Activated CD8-positive, alpha-beta T cell treated with anti-CD3 and anti-CD28 coated beads for 36 hours (primary cell): ENCODE measurements at regions of chr3 and their contacts with region 1.

Region 1: DNA sequence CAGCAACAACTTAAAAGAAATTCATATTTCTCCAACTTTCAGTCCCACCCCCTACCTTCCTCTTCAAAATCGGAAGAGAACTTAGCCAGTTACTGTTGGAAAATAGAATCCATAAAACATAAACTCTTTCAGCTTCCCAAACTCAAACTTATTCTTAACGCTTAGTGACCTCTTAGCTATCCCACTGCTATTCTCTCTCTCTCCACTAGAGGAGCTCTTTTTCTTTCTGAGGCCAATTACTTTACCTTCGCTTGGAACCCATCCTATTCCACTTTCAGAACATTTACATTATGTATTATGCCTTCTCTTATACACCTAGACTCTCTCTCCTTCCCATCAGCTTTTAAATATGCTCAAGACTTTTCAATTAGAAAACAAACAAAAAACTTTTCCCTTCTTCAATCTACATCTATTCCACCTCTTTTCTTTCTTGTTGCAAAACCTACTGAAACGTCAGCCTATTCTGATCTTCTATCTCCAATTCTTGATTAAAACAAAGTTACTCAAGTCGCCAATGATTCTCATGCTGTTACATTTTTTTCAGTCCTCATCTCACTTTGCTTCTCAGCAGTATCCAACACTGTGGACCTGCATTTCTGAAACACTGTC is 13.4 kb upstream of the GHSR start:
- DNase-seq: no peak
- ATAC-seq: peak; percentile 88
- H3K4me3 Mint-ChIP-seq: no peak overlapping the region
- H3K27ac Mint-ChIP-seq: no peak overlapping the region
- H3K4me1 Mint-ChIP-seq: no peaks in the 10 kb centered on the region
- H3K27me3 Mint-ChIP-seq: peaks cover 1% of the 10 kb centered on the region
- CTCF ChIP-seq: peak; percentile 98

Region 2: GRCh38 chr3:172449466-172450149 is 12.0 kb before region 1 on chr3:
- CTCF ChIA-PET with region 1: interaction called, 14 read pairs
- POLR2A ChIA-PET with region 1: no interaction called
- intact Hi-C with region 1: no loop called
- DNase-seq: peak; percentile 25
- ATAC-seq: no peak
- H3K4me3 Mint-ChIP-seq: no peak overlapping the region
- H3K27ac Mint-ChIP-seq: no peak overlapping the region
- H3K4me1 Mint-ChIP-seq: peaks cover 25% of the 10 kb centered on the region
- H3K27me3 Mint-ChIP-seq: peaks cover 71% of the 10 kb centered on the region
- CTCF ChIP-seq: no peak

Region 3: DNA sequence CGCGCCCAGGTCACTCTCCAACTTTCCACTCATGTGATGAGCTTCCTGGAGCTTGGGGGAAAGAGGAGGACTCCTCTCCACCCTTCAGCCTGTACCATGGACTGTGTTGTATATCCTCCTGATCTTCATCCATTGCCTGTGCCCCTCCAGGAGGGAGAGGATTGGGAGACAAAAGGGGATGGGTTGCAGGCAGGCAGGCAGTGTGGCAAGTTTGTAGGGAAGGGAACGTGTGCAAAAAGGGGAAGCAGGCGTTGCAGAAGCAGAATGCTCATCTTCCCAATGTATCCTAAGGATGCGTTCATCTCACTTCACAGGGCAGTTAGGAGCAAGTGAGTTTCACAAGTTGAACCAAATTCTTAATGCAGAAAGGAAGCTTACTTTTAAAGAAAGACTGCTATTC is 14.7 kb after region 1 on chr3:
- CTCF ChIA-PET with region 1: interaction called, 34 read pairs
- POLR2A ChIA-PET with region 1: interaction called, 3 read pairs
- intact Hi-C with region 1: no loop called
- DNase-seq: no peak
- ATAC-seq: no peak
- H3K4me3 Mint-ChIP-seq: peak overlapping the region; percentile 77
- H3K27ac Mint-ChIP-seq: no peak overlapping the region
- H3K4me1 Mint-ChIP-seq: peaks cover 9% of the 10 kb centered on the region
- H3K27me3 Mint-ChIP-seq: peaks cover 3% of the 10 kb centered on the region
- CTCF ChIP-seq: no peak

Region 4: GRCh38 chr3:172501560-172501959 is 39.9 kb after region 1 on chr3:
- CTCF ChIA-PET with region 1: interaction called, 10 read pairs
- POLR2A ChIA-PET with region 1: no interaction called
- intact Hi-C with region 1: no loop called
- DNase-seq: no peak
- ATAC-seq: no peak
- H3K4me3 Mint-ChIP-seq: no peak overlapping the region
- H3K27ac Mint-ChIP-seq: no peak overlapping the region
- H3K4me1 Mint-ChIP-seq: peaks cover 8% of the 10 kb centered on the region
- H3K27me3 Mint-ChIP-seq: no peaks in the 10 kb centered on the region
- CTCF ChIP-seq: no peak

Region 5: DNA sequence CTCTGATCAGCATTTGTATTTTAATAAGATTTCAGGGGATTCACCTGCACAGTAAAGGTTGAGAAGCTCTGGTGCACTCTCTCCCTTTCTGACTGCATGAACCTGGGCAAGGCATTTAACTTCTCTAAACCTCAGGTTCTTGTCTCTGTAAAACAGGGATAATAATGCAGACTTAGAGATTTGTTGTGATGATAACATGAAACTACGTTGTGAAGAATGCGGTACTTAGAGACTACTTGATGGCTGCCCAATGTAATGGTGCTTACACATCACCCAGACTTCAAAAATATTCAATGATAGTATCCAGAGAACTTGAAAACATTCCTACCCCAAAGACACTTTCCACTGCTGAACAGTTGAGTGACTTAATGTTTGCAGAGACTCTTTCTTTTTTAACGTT is 81.4 kb after region 1 on chr3:
- CTCF ChIA-PET with region 1: no interaction called
- POLR2A ChIA-PET with region 1: no interaction called
- intact Hi-C with region 1: no loop called
- DNase-seq: no peak
- ATAC-seq: no peak
- H3K4me3 Mint-ChIP-seq: no peak overlapping the region
- H3K27ac Mint-ChIP-seq: no peak overlapping the region
- H3K4me1 Mint-ChIP-seq: peaks cover 20% of the 10 kb centered on the region
- H3K27me3 Mint-ChIP-seq: no peaks in the 10 kb centered on the region
- CTCF ChIP-seq: no peak

Region 6: GRCh38 chr3:172561897-172562640 is 100.4 kb after region 1 on chr3:
- CTCF ChIA-PET with region 1: no interaction called
- POLR2A ChIA-PET with region 1: no interaction called
- intact Hi-C with region 1: no loop called
- DNase-seq: peak; percentile 35
- ATAC-seq: peak; percentile 65
- H3K4me3 Mint-ChIP-seq: peak overlapping the region; percentile 44
- H3K27ac Mint-ChIP-seq: peak overlapping the region; percentile 91
- H3K4me1 Mint-ChIP-seq: peaks cover 41% of the 10 kb centered on the region
- H3K27me3 Mint-ChIP-seq: no peaks in the 10 kb centered on the region
- CTCF ChIP-seq: no peak

Region 7: GRCh38 chr3:172607305-172608121 is 145.9 kb after region 1 on chr3:
- CTCF ChIA-PET with region 1: interaction called, 15 read pairs
- POLR2A ChIA-PET with region 1: no interaction called
- intact Hi-C with region 1: no loop called
- DNase-seq: no peak
- ATAC-seq: peak; percentile 27
- H3K4me3 Mint-ChIP-seq: no peak overlapping the region
- H3K27ac Mint-ChIP-seq: no peak overlapping the region
- H3K4me1 Mint-ChIP-seq: peaks cover 7% of the 10 kb centered on the region
- H3K27me3 Mint-ChIP-seq: peaks cover 4% of the 10 kb centered on the region
- CTCF ChIP-seq: no peak

Region 8: DNA sequence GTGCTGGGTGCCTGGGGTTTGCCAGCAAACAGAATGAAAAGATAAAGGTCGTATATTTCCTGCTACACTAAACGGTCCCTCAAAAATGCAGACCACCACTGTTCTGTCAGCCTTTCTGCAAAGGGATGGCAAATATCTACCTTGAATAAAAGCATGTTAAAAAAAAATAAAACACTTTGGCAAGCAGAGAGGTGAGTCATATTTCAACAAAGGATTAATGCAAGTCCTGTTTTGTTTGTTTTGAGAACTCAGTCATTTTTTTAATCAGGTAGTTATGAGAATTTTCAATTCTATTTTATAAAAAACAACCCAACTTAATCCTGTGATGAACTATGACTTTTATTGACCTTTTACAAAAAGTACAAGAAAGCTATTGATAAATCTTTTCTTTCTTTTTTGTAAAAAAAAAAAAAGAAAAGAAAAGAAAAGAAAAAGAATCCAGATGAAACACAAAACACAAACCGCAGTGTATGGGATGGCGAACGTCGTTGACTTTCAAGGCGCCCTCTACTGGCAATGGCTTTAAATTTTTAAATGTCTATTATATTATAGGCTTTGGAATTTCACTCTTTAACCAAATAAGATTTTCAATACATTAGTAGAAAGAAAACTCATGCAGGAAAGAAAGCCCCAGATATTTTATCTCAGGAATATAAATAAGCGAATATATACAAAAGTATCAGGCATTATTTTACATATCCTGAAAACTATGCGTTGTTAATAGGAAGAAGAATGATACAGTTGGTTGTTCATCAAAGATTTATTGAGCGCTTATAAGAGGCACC is 161.5 kb after region 1 on chr3:
- CTCF ChIA-PET with region 1: interaction called, 27 read pairs
- POLR2A ChIA-PET with region 1: no interaction called
- intact Hi-C with region 1: no loop called
- DNase-seq: peak; percentile 51
- ATAC-seq: peak; percentile 47
- H3K4me3 Mint-ChIP-seq: no peak overlapping the region
- H3K27ac Mint-ChIP-seq: no peak overlapping the region
- H3K4me1 Mint-ChIP-seq: peaks cover 11% of the 10 kb centered on the region
- H3K27me3 Mint-ChIP-seq: peaks cover 3% of the 10 kb centered on the region
- CTCF ChIP-seq: peak; percentile 85

Region 9: GRCh38 chr3:172666873-172667694 is 205.4 kb after region 1 on chr3:
- CTCF ChIA-PET with region 1: interaction called, 12 read pairs
- POLR2A ChIA-PET with region 1: no interaction called
- intact Hi-C with region 1: no loop called
- DNase-seq: peak; percentile 87
- ATAC-seq: peak; percentile 94
- H3K4me3 Mint-ChIP-seq: no peak overlapping the region
- H3K27ac Mint-ChIP-seq: no peak overlapping the region
- H3K4me1 Mint-ChIP-seq: peaks cover 14% of the 10 kb centered on the region
- H3K27me3 Mint-ChIP-seq: no peaks in the 10 kb centered on the region
- CTCF ChIP-seq: peak; percentile 69